ENCODE measurements at regions of chr3 and their contacts with region 1.

Region 1: GRCh38 chr3:172138795-172139441 is 99.5 kb downstream of the FNDC3B start:
- DNase-seq: no peak
- CTCF ChIP-seq: no peak

Region 2: GRCh38 chr3:172153335-172153861 is 14.5 kb after region 1 on chr3:
- CTCF ChIA-PET with region 1: interaction called, 11 read pairs
- POLR2A ChIA-PET with region 1: interaction called, 3 read pairs
- DNase-seq: no peak
- CTCF ChIP-seq: no peak